ENCODE measurements at regions of chr19 and their contacts with region 1.

Region 1: GRCh38 chr19:28409859-28410258 is 803.1 kb downstream of the UQCRFS1 start:
- DNase-seq: no peak
- H3K4me3 ChIP-seq: no peak overlapping the region
- H3K27ac ChIP-seq: no peak overlapping the region
- H3K4me1 ChIP-seq: peaks cover 0 to 4% (median 0%) of the 10 kb centered on the region in 4 experiments; a peak in 1 of 7 replicates
- H3K27me3 ChIP-seq: no peaks in the 10 kb centered on the region; a peak in 1 of 7 replicates
- CTCF ChIP-seq: no peak
- EP300 ChIP-seq: no peak
- POLR2A ChIP-seq: no peak
- RAD21 ChIP-seq: no peak

Region 2: DNA sequence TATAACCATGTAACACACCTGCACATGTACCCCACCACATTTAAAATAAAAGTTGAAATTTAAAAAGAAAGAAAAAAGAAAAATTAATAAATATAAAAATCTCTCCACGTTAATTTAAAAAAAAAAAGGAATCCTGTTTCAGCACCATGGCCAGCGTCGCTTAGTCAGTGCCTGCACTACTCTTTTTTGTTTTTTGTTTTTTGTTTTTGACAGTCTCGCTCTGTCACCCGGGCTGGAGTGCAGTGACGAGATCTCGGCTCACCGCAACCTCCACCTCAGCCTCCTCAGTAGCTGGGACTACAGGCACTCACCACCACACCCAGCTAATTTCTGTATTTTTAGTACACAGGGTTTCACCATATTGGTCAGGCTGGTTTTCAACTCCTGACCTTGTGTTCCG is 32.8 kb before region 1 on chr19:
- CTCF ChIA-PET with region 1: no interaction called
- POLR2A ChIA-PET with region 1: no interaction called
- DNase-seq: no peak
- H3K4me3 ChIP-seq: no peak overlapping the region
- H3K27ac ChIP-seq: no peak overlapping the region
- H3K4me1 ChIP-seq: no peaks in the 10 kb centered on the region
- H3K27me3 ChIP-seq: no peaks in the 10 kb centered on the region
- CTCF ChIP-seq: no peak
- EP300 ChIP-seq: no peak
- POLR2A ChIP-seq: no peak
- RAD21 ChIP-seq: no peak

Region 3: GRCh38 chr19:28425046-28425931 is 15.4 kb after region 1 on chr19:
- CTCF ChIA-PET with region 1: interaction called, 11 read pairs
- POLR2A ChIA-PET with region 1: interaction called, 5 read pairs
- DNase-seq: no peak
- H3K4me3 ChIP-seq: no peak overlapping the region
- H3K27ac ChIP-seq: no peak overlapping the region
- H3K4me1 ChIP-seq: peaks cover 9 to 25% (median 18%) of the 10 kb centered on the region in 4 experiments
- H3K27me3 ChIP-seq: no peaks in the 10 kb centered on the region
- CTCF ChIP-seq: no peak
- EP300 ChIP-seq: no peak
- POLR2A ChIP-seq: no peak
- RAD21 ChIP-seq: no peak